ENCODE measurements at regions of chr2 and their contacts with region 1.

Region 1: DNA sequence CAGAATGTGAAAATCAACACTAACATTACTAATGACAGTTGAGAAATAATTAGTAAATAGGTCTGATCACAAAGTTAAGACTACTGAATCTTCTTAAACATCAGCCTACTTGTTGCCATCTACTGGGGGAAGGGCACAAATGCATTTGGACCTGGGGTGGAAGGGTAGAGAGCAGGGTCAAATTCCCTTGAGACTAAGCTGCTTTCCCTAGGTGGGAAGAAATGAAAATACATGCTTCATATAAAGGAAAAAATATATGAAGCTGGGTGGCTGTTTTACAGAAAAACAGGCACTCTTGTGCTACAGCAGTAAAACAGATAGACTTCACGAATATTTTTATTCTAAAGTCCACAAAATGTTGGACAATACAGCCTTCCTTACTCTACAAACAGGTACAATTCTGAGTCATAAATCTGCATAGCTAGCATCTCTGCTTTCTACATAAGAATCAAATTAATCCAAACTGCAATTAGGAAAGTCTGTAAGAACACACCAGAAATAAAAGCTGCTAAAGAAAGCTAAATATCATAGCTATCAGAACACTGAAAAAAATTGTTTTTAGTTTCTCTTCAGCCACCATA is 10.9 kb downstream of the TRIP12 start:
- DNase-seq: no peak
- H3K4me3 Mint-ChIP-seq: peak overlapping the region; percentile 6
- H3K27ac Mint-ChIP-seq: peak overlapping the region; percentile 75
- H3K4me1 Mint-ChIP-seq: peaks cover 39% of the 10 kb centered on the region
- H3K27me3 Mint-ChIP-seq: no peaks in the 10 kb centered on the region

Region 2: DNA sequence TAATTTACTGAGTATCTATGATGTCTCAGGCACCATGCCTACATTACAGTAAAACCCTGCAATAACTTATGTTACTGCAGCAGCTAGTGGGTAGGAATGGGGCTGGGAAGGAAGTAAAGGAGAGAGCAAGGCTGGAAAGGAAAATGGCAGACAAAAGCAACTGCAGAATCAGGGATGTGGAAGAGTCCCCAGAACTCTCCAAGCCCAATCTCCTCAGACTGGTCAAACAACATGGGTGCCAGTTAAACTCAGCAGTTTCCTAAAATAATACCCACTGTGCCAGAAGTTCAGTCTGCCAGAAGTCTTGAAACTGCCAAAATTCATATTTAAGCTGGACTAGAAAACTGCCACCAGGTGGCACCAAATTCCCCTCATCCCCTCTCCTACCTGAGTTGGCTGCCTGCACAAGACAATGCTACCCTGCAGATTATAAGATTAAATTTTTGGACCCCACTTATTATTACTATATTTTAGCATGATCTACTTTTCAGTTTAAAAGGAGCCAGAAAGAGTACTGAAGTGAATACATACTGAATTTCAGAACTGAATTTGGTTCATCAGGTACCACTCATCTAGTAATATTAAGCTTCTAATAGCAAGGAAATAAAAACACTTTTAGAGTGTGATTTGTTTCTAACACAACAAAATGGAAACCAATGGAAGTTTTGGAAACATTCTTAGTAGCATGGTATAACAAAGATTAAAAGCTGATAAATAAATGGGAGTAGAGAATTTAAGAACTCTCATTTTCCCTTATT is 109.7 kb before region 1 on chr2:
- intact Hi-C with region 1: loop called (anchors 1 kb)
- DNase-seq: peak; percentile 50
- H3K4me3 Mint-ChIP-seq: no peak overlapping the region
- H3K27ac Mint-ChIP-seq: no peak overlapping the region
- H3K4me1 Mint-ChIP-seq: no peaks in the 10 kb centered on the region
- H3K27me3 Mint-ChIP-seq: no peaks in the 10 kb centered on the region

Region 3: GRCh38 chr2:229873123-229873581 is 37.8 kb before region 1 on chr2:
- intact Hi-C with region 1: loop called (anchors 5 kb)
- DNase-seq: no peak
- H3K4me3 Mint-ChIP-seq: no peak overlapping the region
- H3K27ac Mint-ChIP-seq: no peak overlapping the region
- H3K4me1 Mint-ChIP-seq: peaks cover 43% of the 10 kb centered on the region
- H3K27me3 Mint-ChIP-seq: no peaks in the 10 kb centered on the region

Region 4: DNA sequence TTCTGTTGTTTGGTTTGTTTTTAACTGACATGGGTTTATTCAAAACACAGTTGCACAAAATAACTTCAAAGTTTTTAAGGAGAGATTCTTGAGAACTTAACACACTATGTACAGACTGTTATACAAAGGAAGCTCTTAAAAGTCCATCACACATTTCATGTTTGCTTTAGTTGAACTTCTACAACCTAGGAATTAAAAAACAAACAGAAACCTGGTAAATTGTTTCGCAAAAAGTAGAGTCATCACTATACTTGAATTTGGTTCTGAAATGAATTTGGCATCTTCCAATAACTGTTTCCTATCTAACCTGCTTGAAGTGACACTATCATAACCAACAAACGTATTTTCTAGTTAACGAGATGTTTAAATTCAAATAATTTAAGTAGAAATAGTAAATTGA is 10.9 kb before region 1 on chr2:
- intact Hi-C with region 1: loop called (anchors 1 kb)
- DNase-seq: no peak
- H3K4me3 Mint-ChIP-seq: no peak overlapping the region
- H3K27ac Mint-ChIP-seq: no peak overlapping the region
- H3K4me1 Mint-ChIP-seq: peaks cover 43% of the 10 kb centered on the region
- H3K27me3 Mint-ChIP-seq: no peaks in the 10 kb centered on the region